ENCODE measurements at regions of chr1 and their contacts with region 1.

Region 1: GRCh38 chr1:101257500-101258325 is 20.9 kb downstream of the S1PR1 start:
- DNase-seq: peak; percentile 92

Region 2: DNA sequence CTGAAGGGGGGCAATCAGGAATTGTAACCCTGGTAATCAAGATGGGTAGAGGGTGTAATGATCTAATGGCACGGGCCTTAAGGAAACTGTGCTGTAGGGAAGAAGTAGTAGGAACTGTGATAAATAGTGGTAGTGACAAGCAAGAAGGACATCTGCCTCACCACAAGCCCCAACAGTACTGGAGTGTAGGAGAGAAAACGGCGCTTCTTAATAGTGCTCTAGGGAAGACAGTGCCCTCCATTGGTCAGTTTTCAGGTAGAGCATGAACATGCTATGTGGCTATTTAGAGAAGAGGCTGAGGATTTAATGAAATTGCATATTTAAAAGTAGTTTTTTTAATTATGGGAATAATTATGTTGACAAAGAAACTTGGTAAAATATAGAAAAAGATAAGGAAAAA is 329.6 kb before region 1 on chr1:
- in situ Hi-C with region 1: loop called (anchors 25 kb)
- DNase-seq: no peak